WTC11 (cell line): ENCODE measurements at regions of chr17 and their contacts with region 1.

Region 1: DNA sequence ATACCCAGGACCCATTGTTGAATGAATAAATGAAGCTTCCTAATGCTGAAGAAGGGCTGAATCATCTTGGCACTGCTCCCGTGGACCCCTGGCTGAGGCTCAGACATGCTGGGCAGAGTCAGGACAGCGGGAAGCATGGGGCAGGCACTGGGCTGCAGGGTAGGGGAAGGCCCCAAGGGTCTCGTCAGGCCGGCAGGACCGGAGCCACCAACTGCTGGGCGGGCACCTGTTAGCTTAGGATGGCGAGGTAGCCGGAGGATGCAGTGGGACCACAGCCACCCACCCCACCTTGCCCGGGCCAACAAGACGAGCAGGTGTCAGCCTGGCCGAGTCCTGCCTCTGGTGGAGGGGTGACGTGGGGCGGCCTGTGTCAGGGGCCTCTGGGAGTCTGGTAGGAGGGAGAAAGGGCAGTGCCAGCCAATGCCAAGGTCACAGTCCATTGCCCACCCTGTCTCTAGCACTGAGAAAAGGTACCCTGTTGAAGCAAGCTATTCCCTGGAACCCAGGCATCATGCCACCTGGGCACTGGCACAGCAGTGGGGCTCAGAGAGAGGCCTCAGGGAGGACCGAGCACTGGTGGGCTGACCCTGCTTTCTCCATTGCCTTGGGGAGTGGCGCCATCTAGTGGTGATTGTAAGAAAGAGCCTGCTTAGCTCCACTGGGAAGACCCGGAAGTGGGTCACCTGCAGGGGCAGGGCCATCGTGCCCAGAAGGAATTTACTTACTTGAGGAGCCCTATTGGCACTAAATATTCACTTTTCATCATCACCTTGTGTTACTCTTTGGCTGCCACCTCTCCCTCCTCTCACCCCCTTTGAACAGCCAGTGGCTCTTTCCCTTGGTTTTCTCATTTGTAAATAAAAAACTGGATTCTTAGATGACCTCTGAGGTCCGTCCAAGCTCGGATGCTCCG is 3.0 kb upstream of the DLX3 start:
- DNase-seq: peak; percentile 88
- ATAC-seq: peak; percentile 61
- H3K4me3 Mint-ChIP-seq: peak overlapping the region; percentile 65
- H3K27ac Mint-ChIP-seq: no peak overlapping the region
- H3K4me1 Mint-ChIP-seq: peaks cover 29% of the 10 kb centered on the region
- H3K27me3 Mint-ChIP-seq: peaks cover 86% of the 10 kb centered on the region
- CTCF ChIP-seq: peak; percentile 98

Region 2: GRCh38 chr17:49873466-49873865 is 124.6 kb before region 1 on chr17:
- CTCF ChIA-PET with region 1: interaction called, 105 read pairs
- POLR2A ChIA-PET with region 1: no interaction called
- DNase-seq: no peak
- ATAC-seq: no peak
- H3K4me3 Mint-ChIP-seq: no peak overlapping the region
- H3K27ac Mint-ChIP-seq: peak overlapping the region; percentile 68
- H3K4me1 Mint-ChIP-seq: peaks cover 48% of the 10 kb centered on the region
- H3K27me3 Mint-ChIP-seq: no peaks in the 10 kb centered on the region; the same call in 1 of the 2 replicates
- CTCF ChIP-seq: no peak

Region 3: GRCh38 chr17:49899191-49899485 is 98.9 kb before region 1 on chr17:
- CTCF ChIA-PET with region 1: interaction called, 145 read pairs
- POLR2A ChIA-PET with region 1: interaction called, 5 read pairs
- DNase-seq: peak; percentile 69
- ATAC-seq: peak; percentile 89
- H3K4me3 Mint-ChIP-seq: no peak overlapping the region
- H3K27ac Mint-ChIP-seq: no peak overlapping the region
- H3K4me1 Mint-ChIP-seq: peaks cover 26% of the 10 kb centered on the region
- H3K27me3 Mint-ChIP-seq: peaks cover 51% of the 10 kb centered on the region
- CTCF ChIP-seq: no peak

Region 4: DNA sequence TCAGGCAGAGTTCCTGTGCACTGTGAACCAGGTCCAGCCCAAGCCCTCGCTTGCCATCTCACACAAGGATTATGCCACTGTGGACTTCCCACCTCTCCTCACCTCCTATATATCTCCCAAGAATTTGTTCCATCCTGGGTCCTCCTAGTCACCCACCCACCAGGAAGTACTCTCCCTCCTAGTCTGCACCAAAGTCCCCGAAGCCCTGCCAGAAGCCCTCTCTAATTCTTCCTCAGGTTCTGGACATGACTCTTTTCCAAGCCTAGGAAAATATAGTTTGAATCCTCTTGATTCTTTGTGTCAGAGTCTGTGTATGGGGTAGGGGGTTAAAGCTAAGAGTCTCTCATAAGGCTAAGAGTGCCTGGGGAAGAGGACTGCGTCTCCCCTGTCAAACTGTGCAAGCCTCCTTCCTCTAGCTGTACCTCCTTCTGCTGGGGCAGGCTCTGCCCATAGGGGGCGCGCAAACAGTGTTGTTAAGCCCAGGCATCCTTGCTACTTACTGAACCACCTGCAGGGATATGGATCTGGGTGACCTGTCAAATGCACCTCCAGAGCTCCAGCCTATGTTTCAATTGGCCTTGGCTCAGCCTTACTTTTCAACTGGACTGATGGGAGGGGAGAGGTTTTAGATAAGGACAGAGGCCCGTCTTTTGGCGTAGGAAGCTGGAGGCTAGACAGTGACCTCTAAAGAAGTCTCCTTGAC is 45.7 kb before region 1 on chr17:
- CTCF ChIA-PET with region 1: interaction called, 146 read pairs
- POLR2A ChIA-PET with region 1: no interaction called
- DNase-seq: peak; percentile 95
- ATAC-seq: peak; percentile 94
- H3K4me3 Mint-ChIP-seq: no peak overlapping the region
- H3K27ac Mint-ChIP-seq: no peak overlapping the region
- H3K4me1 Mint-ChIP-seq: peaks cover 10% of the 10 kb centered on the region
- H3K27me3 Mint-ChIP-seq: peaks cover 26% of the 10 kb centered on the region
- CTCF ChIP-seq: peak; percentile 72

Region 5: DNA sequence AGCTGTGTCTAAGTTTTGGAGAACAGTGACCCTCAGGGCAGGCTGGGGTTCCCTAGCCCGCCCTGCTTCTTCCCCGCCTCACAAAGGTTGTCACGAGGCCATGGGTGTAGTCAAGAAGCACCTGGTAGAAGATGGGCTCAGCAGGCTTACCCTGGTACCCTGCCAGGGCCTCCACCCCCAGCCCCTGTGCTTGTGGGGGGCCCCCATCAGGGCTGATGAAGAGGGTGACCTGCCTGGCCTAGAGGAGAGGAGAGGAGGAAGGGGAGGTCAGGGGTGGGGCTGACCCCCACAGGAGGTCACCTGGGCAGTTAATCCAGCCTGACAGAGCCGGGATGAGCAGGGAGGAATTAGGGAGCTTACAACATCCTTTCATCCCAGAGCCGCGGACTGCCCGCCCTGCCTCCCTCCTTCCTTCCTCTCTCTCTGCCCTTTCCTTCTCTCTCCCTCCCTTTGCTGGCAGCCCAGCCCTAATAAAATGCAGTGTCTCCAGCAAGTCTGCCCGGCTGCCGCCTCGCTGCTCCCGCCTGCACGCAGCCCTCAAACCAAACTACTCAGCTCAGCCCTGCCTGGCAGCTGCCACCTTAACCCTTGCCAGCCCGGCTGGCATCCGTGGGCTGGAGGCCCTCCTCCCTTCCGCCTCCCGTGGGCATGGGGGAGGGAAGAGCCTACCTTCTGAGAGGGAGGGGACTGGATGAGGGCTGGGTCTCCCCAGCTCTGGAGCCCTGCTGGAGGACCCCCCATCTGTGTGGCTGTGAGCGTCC is 10.2 kb before region 1 on chr17:
- CTCF ChIA-PET with region 1: interaction called, 18 read pairs
- POLR2A ChIA-PET with region 1: no interaction called
- DNase-seq: no peak
- ATAC-seq: peak; percentile 48
- H3K4me3 Mint-ChIP-seq: peak overlapping the region; percentile 27; the same call in 1 of the 2 replicates
- H3K27ac Mint-ChIP-seq: no peak overlapping the region
- H3K4me1 Mint-ChIP-seq: peaks cover 21% of the 10 kb centered on the region
- H3K27me3 Mint-ChIP-seq: peaks cover 94% of the 10 kb centered on the region
- CTCF ChIP-seq: no peak